Left cardiac atrium (tissue), 4 donors: ENCODE measurements at regions of chr3 and their contacts with region 1.

Region 1: DNA sequence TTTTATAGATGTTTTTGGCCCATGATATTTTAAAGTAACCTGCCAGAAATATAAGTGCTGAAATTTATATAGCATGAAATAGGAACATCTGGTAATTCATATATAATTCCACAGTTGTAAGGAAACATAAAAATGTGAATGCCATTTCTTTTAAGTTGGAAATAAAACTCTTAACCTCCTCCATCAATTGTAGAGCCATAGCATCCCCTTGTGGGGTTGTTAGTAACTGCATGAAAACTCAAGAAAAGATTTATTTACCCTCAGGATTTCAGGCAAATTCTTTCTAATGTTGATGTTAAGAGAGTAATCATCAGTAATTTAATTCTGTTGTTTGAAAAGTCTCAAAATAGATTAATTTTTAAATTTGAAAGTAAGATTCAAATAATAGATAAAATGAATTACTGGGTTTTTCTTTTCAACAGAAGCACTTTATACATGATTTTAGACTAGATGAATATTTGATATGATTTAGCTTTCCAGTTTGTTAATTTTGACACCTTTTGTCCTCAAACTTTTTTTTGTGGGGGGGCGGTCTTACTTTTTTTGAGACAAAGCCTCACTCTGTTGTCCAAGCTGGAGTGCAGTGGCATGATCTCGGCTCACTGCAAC is 74.7 kb downstream of the RASA2 start:
- DNase-seq: no peak
- ATAC-seq: peak in 1 of 2 donors; percentile 41

Region 2: DNA sequence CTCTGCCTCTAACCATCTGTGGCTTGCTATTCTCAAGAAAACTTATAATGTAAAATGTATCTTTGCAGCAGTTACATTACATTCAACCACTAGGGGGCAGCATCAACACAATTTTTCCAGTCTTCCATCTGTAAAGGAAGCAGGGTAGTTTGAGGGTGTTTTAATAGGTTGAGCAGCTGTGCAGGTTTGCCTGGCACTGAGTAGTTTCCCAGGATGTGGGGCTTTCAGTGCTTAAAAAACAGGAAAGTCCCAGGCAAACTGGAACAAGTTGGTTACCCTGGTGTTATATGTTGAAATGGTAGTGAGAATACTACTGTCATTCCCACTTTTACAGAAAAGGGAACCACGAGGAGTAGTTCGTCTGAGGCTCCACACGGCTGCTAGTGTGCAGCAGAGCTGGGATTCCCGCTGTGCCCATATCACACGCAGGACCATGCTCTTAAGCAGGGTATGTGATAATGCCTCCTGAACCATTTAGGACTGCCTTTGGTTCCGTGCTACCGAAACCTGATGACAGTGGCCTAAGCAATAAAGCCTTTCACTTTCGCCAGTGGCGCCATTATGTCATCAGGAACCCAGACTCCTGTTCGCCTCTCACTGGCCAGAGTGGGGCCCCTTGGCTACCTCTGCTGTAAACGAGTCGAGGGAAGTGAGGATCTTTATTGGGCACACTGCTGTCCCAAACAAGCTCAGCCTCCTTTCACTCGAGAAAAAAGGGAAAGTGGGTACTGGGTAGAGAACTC is 257.9 kb before region 1 on chr3:
- intact Hi-C with region 1: loop called in 1 of 2 experiments (anchors 5 kb)
- DNase-seq: no peak
- ATAC-seq: peak; percentile 64 to 72

Region 3: DNA sequence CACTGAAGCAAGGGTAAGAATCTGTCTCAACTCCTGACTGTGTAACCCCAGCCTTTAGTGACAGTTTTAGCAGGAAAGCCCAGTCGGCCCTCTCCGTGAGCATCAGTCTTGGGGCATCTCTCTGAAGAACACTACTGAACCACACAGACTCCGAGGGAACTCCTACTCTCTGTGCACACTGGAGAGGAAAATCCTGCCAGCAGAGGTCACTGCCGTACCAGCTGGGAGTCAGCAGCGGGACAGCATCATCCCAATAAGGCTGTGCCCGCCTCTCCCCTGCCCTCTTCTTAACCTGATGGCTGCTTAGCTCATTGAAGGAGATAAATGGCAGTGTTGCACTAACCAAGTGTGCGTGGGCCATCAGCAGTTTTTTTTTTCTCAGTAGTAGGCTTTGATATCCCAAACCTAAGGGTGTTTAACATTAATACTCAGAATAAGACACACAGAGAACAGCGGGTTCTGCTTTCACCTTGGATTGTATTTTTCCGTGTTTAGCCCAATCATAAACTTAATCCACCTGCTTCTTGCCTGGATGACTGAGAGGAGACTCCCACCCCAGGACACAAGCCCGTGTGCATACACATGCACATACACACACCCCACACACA is 101.3 kb before region 1 on chr3:
- intact Hi-C with region 1: loop called in 1 of 2 experiments (anchors 2 kb)
- DNase-seq: peak; percentile 90
- ATAC-seq: peak; percentile 97

Region 4: GRCh38 chr3:141477224-141477623 is 84.3 kb before region 1 on chr3:
- intact Hi-C with region 1: loop called in 1 of 2 experiments (anchors 5 kb)
- DNase-seq: no peak
- ATAC-seq: peak; percentile 41 to 82